Endothelial cell of umbilical vein (primary cell): ENCODE measurements at regions of chr5 and their contacts with region 1.

Region 1: GRCh38 chr5:73729329-73729728 is 103.3 kb downstream of the ARHGEF28 start:
- DNase-seq: no peak
- H3K4me3 ChIP-seq: no peak overlapping the region
- H3K27ac ChIP-seq: no peak overlapping the region
- H3K4me1 ChIP-seq: no peaks in the 10 kb centered on the region
- H3K27me3 ChIP-seq: no peaks in the 10 kb centered on the region
- CTCF ChIP-seq: no peak
- POLR2A ChIP-seq: no peak

Region 2: GRCh38 chr5:73605227-73606020 is 123.9 kb before region 1 on chr5:
- CTCF ChIA-PET with region 1: no interaction called
- POLR2A ChIA-PET with region 1: no interaction called
- dilution Hi-C with region 1: no loop called
- intact Hi-C with region 1: no loop called
- DNase-seq: peak; percentile 89
- H3K4me3 ChIP-seq: no peak overlapping the region
- H3K27ac ChIP-seq: peak overlapping the region; percentile 84
- H3K4me1 ChIP-seq: peaks cover 46% of the 10 kb centered on the region
- H3K27me3 ChIP-seq: no peaks in the 10 kb centered on the region
- CTCF ChIP-seq: no peak
- POLR2A ChIP-seq: peak; percentile 58

Region 3: DNA sequence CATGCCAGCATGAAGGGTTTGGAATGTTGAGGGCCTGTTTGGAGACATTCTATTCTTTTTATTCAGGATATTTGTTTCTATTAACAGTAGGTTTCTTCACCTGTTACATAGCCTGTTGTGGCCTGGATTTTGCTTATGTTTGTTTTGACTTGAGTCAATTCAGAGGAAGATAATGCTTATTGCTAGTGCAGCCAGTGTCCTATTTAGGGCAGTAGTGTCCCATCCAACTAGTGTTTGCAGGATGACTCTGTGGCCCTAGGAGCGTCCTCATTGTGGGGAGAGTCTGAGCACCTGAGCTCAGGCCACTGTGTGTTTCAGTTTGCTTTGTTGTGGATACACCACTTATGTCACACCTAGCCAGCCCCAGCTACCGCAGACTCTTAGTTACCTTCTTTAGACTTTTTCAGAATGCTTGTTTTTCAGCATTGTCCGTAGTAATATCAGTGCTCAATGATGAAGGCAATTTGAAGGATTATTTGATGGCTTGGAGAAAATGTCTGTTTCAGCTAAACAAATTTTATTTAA is 13.0 kb before region 1 on chr5:
- CTCF ChIA-PET with region 1: interaction called, 15 read pairs
- POLR2A ChIA-PET with region 1: no interaction called
- dilution Hi-C with region 1: no loop called
- intact Hi-C with region 1: no loop called
- DNase-seq: no peak
- H3K4me3 ChIP-seq: no peak overlapping the region
- H3K27ac ChIP-seq: no peak overlapping the region
- H3K4me1 ChIP-seq: peaks cover 26% of the 10 kb centered on the region
- H3K27me3 ChIP-seq: no peaks in the 10 kb centered on the region
- CTCF ChIP-seq: no peak
- POLR2A ChIP-seq: no peak